OCI-LY7 (cell line): ENCODE measurements at regions of chr3 and their contacts with region 1.

Region 1: GRCh38 chr3:23805633-23806533 is at the start of gene UBE2E1:
- DNase-seq: peak; percentile 87
- H3K4me3 ChIP-seq: peak within 1 kb of the TSS; percentile 85
- H3K27ac ChIP-seq: peak within 1 kb of the TSS; percentile 47
- H3K4me1 ChIP-seq: peaks cover 48% of the 10 kb centered on the region
- CTCF ChIP-seq: no peak
- total RNA-seq, gene UBE2E1: 96.7 and 126 TPM in 2 replicates

Region 2: DNA sequence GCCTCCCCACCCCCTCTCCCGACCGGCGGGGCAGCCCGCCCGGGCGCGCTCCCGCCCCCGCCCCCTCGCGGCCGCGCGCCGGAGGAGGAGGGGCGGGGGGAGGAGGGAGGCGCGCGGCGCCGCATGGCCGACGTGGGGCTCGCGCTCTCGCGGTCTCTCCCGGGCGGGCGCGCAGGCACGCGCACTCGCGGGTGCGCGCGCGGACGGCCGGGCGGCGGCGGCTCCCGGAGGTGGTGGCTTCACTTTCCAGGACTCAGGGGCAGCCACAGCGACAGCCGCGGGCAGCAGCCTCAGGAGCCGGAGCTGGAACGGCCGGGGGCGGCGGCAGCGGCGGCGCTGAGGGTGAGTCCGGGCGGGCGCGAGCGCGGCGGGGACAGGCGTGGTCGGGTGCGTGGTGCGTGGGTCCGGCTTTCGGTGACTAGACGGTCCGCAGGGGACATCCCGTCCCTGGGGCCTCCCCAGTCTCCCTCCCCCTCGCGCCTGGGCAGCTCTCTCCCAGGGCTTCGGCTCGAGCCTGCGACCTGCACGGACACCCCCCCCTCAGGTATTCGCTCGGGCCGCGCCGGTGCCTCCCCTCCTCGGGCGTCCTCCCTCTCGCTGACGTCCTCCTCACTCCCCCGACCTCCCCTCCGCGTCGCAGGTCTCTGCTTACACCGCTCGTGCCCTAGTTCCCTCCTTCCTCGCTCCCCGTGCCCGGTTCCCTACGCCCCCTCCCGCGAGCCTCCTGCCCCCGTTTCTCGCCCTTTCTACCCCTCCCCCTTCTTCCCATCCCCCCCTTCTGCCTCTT is 602.8 kb before region 1 on chr3 and contains the start of gene UBE2E2:
- CTCF ChIA-PET with region 1: no interaction called
- POLR2A ChIA-PET with region 1: interaction called, 3 read pairs
- intact Hi-C with region 1: loop called (anchors 10 kb)
- DNase-seq: peak; percentile 88
- H3K4me3 ChIP-seq: peak within 1 kb of the TSS; percentile 99
- H3K27ac ChIP-seq: peak within 1 kb of the TSS; percentile 33
- H3K4me1 ChIP-seq: peaks cover 29% of the 10 kb centered on the region
- CTCF ChIP-seq: no peak
- total RNA-seq, gene UBE2E2: 41.1 and 63.2 TPM in 2 replicates

Region 3: DNA sequence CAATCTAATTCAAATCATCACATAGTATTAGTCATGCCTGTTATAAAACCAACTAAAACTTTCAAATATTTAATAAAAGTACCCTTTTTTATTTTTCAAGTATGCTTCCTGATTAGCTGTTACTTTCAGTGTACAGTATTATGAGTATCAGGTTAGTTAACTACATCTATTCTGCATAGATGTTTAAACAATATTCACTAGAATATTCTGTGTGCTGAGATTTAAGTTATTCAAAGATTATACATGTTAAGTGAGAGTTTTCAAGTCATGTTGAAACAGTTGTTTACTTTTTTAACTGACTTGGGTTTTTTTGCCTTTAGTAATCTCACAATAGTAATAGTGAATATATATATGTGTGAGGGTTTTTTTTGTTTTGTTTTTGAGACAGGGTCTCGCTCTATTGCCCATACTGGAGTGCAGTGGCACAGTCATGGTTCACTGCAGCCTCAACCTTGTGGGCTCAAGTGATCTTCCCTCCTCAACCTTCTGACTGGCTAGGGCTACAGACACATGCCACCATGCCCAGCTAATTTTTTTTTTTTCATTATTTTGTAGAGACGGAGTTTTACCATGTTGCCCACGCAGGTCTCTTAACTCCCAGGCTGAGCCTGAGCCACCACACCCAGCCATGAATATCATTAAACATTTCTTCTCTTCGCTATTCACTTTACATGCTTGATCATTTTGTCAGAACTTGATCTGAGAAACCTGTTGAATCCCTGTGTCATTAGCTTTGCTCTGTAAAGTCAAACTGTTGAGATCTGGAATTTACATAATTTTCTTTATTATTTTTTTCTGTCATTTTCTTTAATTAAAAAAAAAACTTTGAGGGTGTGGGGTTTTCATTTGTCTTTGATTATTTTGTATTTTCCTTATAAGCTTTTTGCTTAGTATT is 286.3 kb before region 1 on chr3:
- CTCF ChIA-PET with region 1: interaction called, 3 read pairs
- POLR2A ChIA-PET with region 1: no interaction called
- intact Hi-C with region 1: loop called (anchors 5 kb)
- DNase-seq: peak; percentile 72
- H3K4me3 ChIP-seq: peak overlapping the region; percentile 8
- H3K27ac ChIP-seq: peak overlapping the region; percentile 47
- H3K4me1 ChIP-seq: peaks cover 63% of the 10 kb centered on the region
- CTCF ChIP-seq: no peak

Region 4: DNA sequence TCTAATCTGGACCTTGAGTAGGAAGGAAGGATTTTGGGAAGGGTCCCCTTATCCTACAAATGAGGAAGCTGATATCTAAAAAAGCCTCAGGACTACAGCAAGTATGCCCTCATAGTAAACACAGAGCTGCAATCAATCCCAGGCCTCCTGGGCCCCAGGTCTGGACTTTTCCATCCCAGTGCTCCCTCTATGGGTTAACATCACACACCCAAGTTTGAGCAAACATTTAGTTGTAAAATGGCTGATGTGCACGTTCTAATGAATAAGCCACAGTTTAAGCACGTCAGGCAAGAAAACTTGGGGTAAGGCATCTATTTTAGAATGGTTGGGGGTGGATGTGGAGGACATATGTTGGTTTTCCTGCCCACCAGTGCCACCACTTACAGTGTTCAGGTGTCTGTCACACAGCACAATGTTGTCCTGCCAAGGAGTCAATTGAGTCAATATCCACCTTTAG is 44.4 kb before region 1 on chr3:
- CTCF ChIA-PET with region 1: no interaction called
- POLR2A ChIA-PET with region 1: interaction called, 4 read pairs
- intact Hi-C with region 1: loop called (anchors 2 kb)
- DNase-seq: peak; percentile 79
- H3K4me3 ChIP-seq: peak overlapping the region; percentile 42
- H3K27ac ChIP-seq: peak overlapping the region; percentile 92
- H3K4me1 ChIP-seq: peaks cover 66% of the 10 kb centered on the region
- CTCF ChIP-seq: peak; percentile 75

Region 5: GRCh38 chr3:23865595-23866450 is 59.9 kb after region 1 on chr3:
- CTCF ChIA-PET with region 1: no interaction called
- POLR2A ChIA-PET with region 1: interaction called, 3 read pairs
- intact Hi-C with region 1: loop called (anchors 2 kb)
- DNase-seq: peak; percentile 27
- H3K4me3 ChIP-seq: no peak overlapping the region
- H3K27ac ChIP-seq: no peak overlapping the region
- H3K4me1 ChIP-seq: peaks cover 29% of the 10 kb centered on the region
- CTCF ChIP-seq: no peak

Region 6: DNA sequence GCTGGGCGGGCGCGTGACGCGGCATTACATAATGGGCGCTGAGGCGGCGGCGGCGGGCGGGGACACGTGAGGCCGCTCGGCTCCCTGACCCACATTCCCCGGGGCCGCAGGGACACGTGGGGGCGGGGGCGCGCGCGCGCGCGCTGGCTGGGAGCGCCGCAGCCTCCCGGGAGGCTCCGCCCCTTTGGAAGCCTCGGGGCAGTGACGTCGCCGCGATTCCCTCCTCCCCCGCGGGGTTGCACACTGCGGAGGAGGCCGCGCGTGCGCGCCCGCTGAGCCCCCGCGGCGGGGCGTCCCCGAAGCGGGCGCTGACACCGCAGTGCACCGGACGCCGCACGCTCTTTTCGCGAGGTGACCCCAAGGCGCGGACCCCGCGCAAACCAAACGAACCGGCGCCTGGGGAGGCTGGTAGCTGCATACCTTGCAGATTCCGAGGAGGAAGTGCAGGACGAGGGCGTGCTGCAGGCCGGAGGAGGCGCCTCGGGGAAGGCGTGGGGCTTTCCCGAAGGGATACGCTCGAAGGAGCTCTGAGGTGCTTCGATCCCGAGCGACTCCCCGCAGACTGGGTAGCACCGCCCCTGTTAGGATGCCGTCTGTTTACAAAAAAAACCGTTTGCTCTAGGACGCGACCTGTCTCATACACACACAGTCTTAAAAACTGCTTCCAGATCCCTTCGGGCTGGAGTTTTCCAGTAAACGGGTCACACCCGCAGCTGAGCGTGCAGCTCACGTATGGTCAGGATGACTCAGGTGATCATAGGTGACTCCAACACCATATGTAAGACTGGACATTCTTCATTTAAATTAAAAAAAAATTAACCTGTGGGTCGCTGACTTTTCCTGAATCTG is 140.2 kb after region 1 on chr3:
- CTCF ChIA-PET with region 1: no interaction called
- POLR2A ChIA-PET with region 1: no interaction called
- intact Hi-C with region 1: loop called (anchors 5 kb)
- DNase-seq: peak; percentile 95
- H3K4me3 ChIP-seq: peak overlapping the region; percentile 72
- H3K27ac ChIP-seq: peak overlapping the region; percentile 54
- H3K4me1 ChIP-seq: peaks cover 38% of the 10 kb centered on the region
- CTCF ChIP-seq: no peak